CD8-positive, alpha-beta T cell (primary cell): ENCODE measurements at regions of chr21 and their contacts with region 1.

Region 1: DNA sequence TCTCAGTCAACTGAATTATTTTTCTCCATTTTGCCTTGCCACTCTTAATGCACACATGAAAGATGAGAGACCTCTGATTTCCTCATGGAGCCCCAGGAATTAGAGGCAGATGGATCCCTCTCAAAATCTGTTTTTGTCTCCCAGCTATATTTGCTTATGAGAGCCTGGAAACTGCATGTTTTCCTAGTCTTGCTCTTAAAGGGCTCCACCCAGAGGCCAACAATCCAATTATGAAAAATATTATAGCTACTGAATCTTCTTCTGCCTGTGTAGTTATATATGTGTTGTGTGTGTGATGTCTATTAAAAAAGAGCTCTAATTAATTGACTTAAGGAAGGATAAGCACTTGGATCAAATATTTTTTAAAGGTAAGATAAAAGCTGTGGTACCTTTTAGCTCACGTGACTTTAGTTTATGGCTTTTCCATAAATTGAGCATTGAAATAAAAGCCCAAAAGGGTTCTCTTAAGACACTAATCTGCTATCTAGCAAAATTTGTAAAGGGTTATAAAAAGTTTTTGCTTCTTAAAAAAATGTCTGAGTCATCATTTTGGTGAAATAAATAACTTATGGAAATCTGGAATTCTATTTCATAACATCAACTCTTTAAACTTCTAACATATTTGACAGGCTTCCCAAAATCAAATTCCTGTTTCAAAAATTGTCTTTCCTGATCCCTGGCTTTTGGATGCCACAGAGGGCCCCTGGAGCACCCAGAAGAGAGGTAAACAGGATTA is 31.2 kb upstream of the TSPEAR start:
- DNase-seq: peak in 2 of 9 experiments; percentile 57 to 67
- ATAC-seq: no peak
- H3K4me3 ChIP-seq: no peak overlapping the region
- H3K4me3 Mint-ChIP-seq: no peak overlapping the region
- H3K27ac ChIP-seq: no peak overlapping the region
- H3K27ac Mint-ChIP-seq: peak overlapping the region; percentile 35
- H3K4me1 ChIP-seq: no peaks in the 10 kb centered on the region
- H3K4me1 Mint-ChIP-seq: peaks cover 6% of the 10 kb centered on the region
- H3K27me3 ChIP-seq: no peaks in the 10 kb centered on the region
- H3K27me3 Mint-ChIP-seq: no peaks in the 10 kb centered on the region
- CTCF ChIP-seq: peak; percentile 41

Region 2: DNA sequence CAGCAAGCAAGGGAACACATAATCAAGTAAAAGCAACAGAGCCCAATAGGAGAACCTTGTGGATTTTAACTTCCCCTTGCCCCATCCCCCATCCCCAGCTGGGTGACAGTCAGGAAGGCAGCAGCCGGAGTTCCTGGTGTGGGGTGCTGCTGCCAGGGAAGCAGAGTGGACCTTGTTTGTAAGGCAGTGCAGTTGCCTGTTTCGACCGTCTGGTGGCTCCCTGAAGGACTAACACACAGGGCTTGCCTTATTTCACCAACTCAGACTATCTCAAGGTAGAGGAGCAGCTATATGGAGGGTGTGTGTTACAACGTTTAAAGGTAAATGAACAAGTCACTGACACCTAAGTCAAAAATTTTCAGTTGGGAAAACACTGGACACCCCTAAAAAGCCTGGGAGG is 124.1 kb before region 1 on chr21:
- CTCF ChIA-PET with region 1: interaction called, 17 read pairs
- POLR2A ChIA-PET with region 1: interaction called, 3 read pairs
- intact Hi-C with region 1: no loop called
- DNase-seq: peak in 2 of 9 experiments; percentile 44 to 51
- ATAC-seq: peak; percentile 46
- H3K4me3 ChIP-seq: peak overlapping the region; percentile 6 to 12
- H3K4me3 Mint-ChIP-seq: peak overlapping the region; percentile 35
- H3K27ac ChIP-seq: peak overlapping the region; percentile 33 to 85
- H3K27ac Mint-ChIP-seq: peak overlapping the region; percentile 92
- H3K4me1 ChIP-seq: peaks cover 45% of the 10 kb centered on the region
- H3K4me1 Mint-ChIP-seq: peaks cover 57% of the 10 kb centered on the region
- H3K27me3 ChIP-seq: no peaks in the 10 kb centered on the region
- H3K27me3 Mint-ChIP-seq: no peaks in the 10 kb centered on the region
- CTCF ChIP-seq: no peak

Region 3: DNA sequence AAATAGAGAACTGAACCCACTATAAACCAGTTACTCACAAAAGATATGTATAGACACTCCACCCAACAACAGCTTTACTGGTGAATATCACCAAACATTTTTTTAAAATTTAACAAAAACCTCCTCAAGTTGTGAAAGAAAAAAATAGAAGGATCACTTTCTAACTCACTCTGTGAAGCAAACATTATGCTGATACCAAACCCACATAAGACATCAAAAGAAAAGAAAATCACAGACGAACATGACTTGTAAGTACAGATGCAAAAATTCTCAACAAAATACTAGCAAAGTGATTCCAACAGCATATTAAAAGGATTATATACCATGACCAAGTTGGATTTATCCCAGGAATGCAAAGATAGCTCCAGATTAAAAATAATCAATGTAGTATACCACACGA is 50.9 kb before region 1 on chr21:
- CTCF ChIA-PET with region 1: interaction called, 10 read pairs
- POLR2A ChIA-PET with region 1: no interaction called
- intact Hi-C with region 1: no loop called
- DNase-seq: no peak
- ATAC-seq: no peak
- H3K4me3 ChIP-seq: no peak overlapping the region
- H3K4me3 Mint-ChIP-seq: no peak overlapping the region
- H3K27ac ChIP-seq: no peak overlapping the region
- H3K27ac Mint-ChIP-seq: peak overlapping the region; percentile 46
- H3K4me1 ChIP-seq: peaks cover 22% of the 10 kb centered on the region
- H3K4me1 Mint-ChIP-seq: peaks cover 21% of the 10 kb centered on the region
- H3K27me3 ChIP-seq: no peaks in the 10 kb centered on the region
- H3K27me3 Mint-ChIP-seq: peaks cover 7% of the 10 kb centered on the region
- CTCF ChIP-seq: no peak

Region 4: DNA sequence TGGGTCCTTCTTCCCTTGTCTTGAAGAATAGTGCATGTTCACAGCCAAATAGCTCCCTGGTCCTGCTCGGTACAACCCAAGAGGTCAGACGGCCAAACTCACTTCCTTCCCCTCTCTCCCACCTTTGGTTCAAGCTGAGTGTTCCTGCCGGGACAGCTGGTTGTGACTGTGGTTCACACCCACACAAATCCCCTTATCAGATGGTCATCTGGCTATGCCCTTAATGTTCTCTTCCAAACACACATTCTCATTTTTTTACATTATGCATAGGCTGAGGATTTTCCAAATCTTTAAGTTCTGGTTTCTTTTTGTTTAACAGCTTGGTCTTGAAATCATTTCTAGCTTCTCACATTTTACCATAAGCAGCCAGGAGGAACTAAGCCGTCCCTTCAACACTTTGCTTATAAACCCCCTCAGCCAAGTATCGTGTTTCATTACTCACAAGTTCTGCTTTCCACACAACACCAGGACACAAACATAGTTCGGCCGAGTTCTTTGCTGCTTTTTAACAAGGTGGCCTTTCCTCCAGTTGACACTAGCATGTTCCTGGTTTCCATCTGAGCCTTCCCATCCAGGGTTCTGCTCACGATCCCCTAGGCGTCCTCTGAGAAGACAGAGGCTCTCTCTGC is 11.5 kb before region 1 on chr21:
- CTCF ChIA-PET with region 1: interaction called, 12 read pairs
- POLR2A ChIA-PET with region 1: no interaction called
- intact Hi-C with region 1: no loop called
- DNase-seq: no peak
- ATAC-seq: no peak
- H3K4me3 ChIP-seq: no peak overlapping the region
- H3K4me3 Mint-ChIP-seq: no peak overlapping the region
- H3K27ac ChIP-seq: no peak overlapping the region
- H3K27ac Mint-ChIP-seq: no peak overlapping the region
- H3K4me1 ChIP-seq: no peaks in the 10 kb centered on the region
- H3K4me1 Mint-ChIP-seq: no peaks in the 10 kb centered on the region
- H3K27me3 ChIP-seq: no peaks in the 10 kb centered on the region
- H3K27me3 Mint-ChIP-seq: peaks cover 4% of the 10 kb centered on the region
- CTCF ChIP-seq: no peak

Region 5: GRCh38 chr21:44792702-44793591 is 50.4 kb after region 1 on chr21:
- CTCF ChIA-PET with region 1: interaction called, 18 read pairs
- POLR2A ChIA-PET with region 1: no interaction called
- intact Hi-C with region 1: loop called (anchors 1 to 2 kb)
- DNase-seq: peak in 8 of 9 experiments; percentile 29 to 76 (median 54)
- ATAC-seq: peak; percentile 97
- H3K4me3 ChIP-seq: no peak overlapping the region
- H3K4me3 Mint-ChIP-seq: no peak overlapping the region
- H3K27ac ChIP-seq: no peak overlapping the region
- H3K27ac Mint-ChIP-seq: peak overlapping the region; percentile 49
- H3K4me1 ChIP-seq: peaks cover 10% of the 10 kb centered on the region
- H3K4me1 Mint-ChIP-seq: peaks cover 64% of the 10 kb centered on the region
- H3K27me3 ChIP-seq: no peaks in the 10 kb centered on the region
- H3K27me3 Mint-ChIP-seq: no peaks in the 10 kb centered on the region
- CTCF ChIP-seq: peak; percentile 90

Region 6: GRCh38 chr21:45341779-45342178 is 599.2 kb after region 1 on chr21:
- CTCF ChIA-PET with region 1: no interaction called
- POLR2A ChIA-PET with region 1: no interaction called
- intact Hi-C with region 1: loop called in 1 of 2 experiments (anchors 10 kb)
- DNase-seq: no peak
- ATAC-seq: no peak
- H3K4me3 ChIP-seq: no peak overlapping the region
- H3K4me3 Mint-ChIP-seq: no peak overlapping the region
- H3K27ac ChIP-seq: no peak overlapping the region
- H3K27ac Mint-ChIP-seq: no peak overlapping the region
- H3K4me1 ChIP-seq: no peaks in the 10 kb centered on the region
- H3K4me1 Mint-ChIP-seq: no peaks in the 10 kb centered on the region
- H3K27me3 ChIP-seq: no peaks in the 10 kb centered on the region
- H3K27me3 Mint-ChIP-seq: peaks cover 12% of the 10 kb centered on the region
- CTCF ChIP-seq: no peak